ENCODE measurements at regions of chr19 and their contacts with region 1.

Region 1: GRCh38 chr19:5977785-5978605 is at the start of gene RANBP3:
- DNase-seq: peak; percentile 98 to 100 (median 99)
- H3K4me3 ChIP-seq: peak within 1 kb of the TSS; percentile 78 to 81
- H3K4me3 Mint-ChIP-seq: peak within 1 kb of the TSS; percentile 91 to 99 (median 94)
- H3K27ac ChIP-seq: peak within 1 kb of the TSS; percentile 84
- H3K27ac Mint-ChIP-seq: peak within 1 kb of the TSS; percentile 95 to 97 (median 96)
- H3K4me1 ChIP-seq: peaks cover 65% of the 10 kb centered on the region
- H3K4me1 Mint-ChIP-seq: peaks cover 38 to 71% (median 50%) of the 10 kb centered on the region in 4 donors
- H3K27me3 ChIP-seq: no peaks in the 10 kb centered on the region
- H3K27me3 Mint-ChIP-seq: no peaks in the 10 kb centered on the region
- total RNA-seq, gene RANBP3: 84.1 to 94.9 TPM

Region 2: DNA sequence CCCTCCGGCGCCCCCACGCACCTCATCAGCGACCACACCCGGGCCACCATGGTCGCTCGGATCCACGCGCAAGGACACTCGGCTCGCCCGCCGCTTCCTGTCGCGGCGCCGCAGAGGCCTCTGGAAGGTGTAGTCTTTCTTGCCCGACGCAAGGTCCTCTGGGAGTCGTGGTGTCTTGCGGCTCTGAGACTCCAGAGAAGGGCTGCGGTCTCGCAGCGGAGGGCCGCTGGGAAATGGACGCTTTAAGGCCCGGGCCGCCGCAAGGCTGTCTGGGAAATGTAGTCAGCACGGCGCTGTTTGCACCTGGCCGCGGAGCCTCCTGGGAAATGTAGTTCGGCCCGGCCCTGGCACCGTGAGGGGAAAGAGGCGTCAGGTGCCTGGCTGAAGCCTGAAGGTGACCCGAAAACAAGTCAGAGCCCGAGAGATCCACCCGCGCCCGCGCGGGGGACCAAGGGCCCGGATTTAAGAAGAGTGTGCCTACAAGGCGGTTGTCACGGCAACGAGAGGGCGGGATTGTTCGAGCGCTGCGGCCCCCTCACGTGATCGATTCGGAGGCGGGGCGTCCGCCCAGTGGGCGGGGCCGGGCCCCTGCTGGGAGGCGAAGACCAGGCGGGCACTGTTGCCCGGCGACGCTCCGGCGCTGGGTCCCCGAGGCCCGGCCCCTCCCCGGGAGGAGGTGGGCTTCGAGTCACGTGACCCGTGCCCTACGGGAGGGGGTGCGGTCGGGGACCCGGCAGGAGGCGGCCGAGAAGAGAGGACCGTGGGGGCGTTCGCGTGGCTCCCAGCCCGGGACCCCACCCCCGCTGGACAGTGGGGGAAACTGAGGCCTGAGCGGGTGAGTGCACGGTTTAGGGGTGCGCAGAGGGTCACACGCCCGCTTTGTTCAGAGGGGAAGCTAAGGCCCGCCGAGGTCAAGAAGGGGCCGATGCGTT is 297.3 kb before region 1 on chr19 and contains the starts of genes HSD11B1L and MICOS13:
- CTCF ChIA-PET with region 1: no interaction called
- POLR2A ChIA-PET with region 1: no interaction called
- intact Hi-C with region 1: loop called (anchors 2 kb)
- DNase-seq: peak; percentile 99 to 100 (median 99)
- H3K4me3 ChIP-seq: peak within 1 kb of the TSS; percentile 62 to 96
- H3K4me3 Mint-ChIP-seq: peak within 1 kb of the TSS; percentile 87 to 98 (median 93)
- H3K27ac ChIP-seq: peak within 1 kb of the TSS; percentile 87
- H3K27ac Mint-ChIP-seq: peak within 1 kb of the TSS; percentile 94 to 100 (median 99)
- H3K4me1 ChIP-seq: peaks cover 21% of the 10 kb centered on the region
- H3K4me1 Mint-ChIP-seq: peaks cover 18 to 41% (median 26%) of the 10 kb centered on the region in 4 donors
- H3K27me3 ChIP-seq: no peaks in the 10 kb centered on the region
- H3K27me3 Mint-ChIP-seq: no peaks in the 10 kb centered on the region
- total RNA-seq, gene HSD11B1L: 3.5 to 4.8 TPM
- total RNA-seq, gene MICOS13: 40.5 to 41.1 TPM

Region 3: DNA sequence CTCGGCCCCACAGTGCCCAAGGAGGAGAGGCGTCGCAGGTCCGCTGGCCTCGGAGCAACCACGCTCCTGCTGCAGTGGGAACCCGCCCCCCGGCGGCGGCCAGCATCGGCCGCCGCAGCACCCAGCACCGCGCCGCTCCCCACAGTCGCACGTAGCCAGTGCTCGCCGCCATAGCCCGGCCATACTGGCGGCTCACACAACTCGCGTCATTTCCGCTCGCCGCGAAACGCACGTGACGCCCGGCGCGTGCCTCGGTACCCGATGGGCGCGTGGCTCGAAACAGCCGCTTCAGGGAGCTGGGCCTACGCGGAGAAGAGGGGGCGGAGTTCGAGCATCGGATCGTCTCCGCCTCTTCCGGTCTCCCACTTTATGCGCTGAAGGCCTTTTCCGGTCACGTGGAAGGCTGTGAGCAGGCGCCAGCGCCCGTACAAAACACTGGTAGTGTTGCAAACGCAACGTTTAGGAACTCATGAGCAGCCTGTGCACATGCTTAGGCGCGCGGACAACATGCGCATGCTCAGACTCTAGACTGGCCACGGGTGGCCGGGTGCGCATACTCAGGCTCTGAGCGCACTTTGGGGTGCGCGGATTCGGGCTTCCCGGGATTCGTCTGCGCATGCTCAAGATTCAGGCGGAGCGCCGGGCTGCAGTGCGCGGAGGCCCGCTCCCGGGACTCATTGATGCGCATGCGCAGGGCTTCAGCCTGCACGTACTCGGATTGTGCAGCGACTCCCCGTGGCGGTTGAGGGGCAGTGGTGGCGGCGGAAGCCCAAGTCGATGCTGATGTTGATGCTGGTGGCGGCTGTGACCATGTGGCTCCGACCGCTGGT is 257.8 kb before region 1 on chr19 and contains the starts of genes CATSPERD and LONP1:
- CTCF ChIA-PET with region 1: no interaction called
- POLR2A ChIA-PET with region 1: interaction called, 3 read pairs
- intact Hi-C with region 1: loop called (anchors 1 kb)
- DNase-seq: peak; percentile 98 to 99 (median 99)
- H3K4me3 ChIP-seq: peak within 1 kb of the TSS; percentile 87 to 92
- H3K4me3 Mint-ChIP-seq: peak within 1 kb of the TSS; percentile 90 to 97 (median 90)
- H3K27ac ChIP-seq: peak within 1 kb of the TSS; percentile 89
- H3K27ac Mint-ChIP-seq: peak within 1 kb of the TSS; percentile 94 to 99 (median 97)
- H3K4me1 ChIP-seq: peaks cover 23% of the 10 kb centered on the region
- H3K4me1 Mint-ChIP-seq: peaks cover 20 to 37% (median 27%) of the 10 kb centered on the region in 4 donors
- H3K27me3 ChIP-seq: no peaks in the 10 kb centered on the region
- H3K27me3 Mint-ChIP-seq: peaks cover 0 to 6% of the 10 kb centered on the region in 2 donors
- total RNA-seq, gene CATSPERD: not detected
- total RNA-seq, gene LONP1: 59.6 to 64.7 TPM

Region 4: DNA sequence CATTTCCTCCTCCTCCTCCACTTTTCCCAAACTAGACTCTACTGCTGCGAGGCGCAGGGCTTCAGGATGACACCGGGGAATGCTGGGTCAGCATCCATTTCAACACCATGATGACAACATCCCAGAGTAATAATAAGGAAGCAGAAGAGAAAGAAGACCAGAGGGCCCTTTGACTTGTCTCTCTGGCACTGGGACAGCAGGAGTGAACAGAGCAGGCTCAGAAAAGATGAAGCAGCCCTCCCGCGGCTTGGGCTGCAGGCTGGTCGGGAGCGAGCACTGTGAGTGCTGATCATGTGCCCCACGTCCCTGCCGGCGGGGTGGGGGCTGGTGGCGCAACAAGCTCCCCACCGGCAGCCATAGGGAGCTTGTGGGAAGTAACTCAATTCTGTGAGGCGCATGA is 30.6 kb before region 1 on chr19:
- CTCF ChIA-PET with region 1: interaction called, 3 read pairs
- POLR2A ChIA-PET with region 1: interaction called, 23 read pairs
- intact Hi-C with region 1: no loop called
- DNase-seq: no peak
- H3K4me3 ChIP-seq: no peak overlapping the region
- H3K4me3 Mint-ChIP-seq: peak overlapping the region in 3 of 8 donors; percentile 38 to 61 (median 40)
- H3K27ac ChIP-seq: no peak overlapping the region
- H3K27ac Mint-ChIP-seq: peak overlapping the region in 6 of 7 donors; percentile 36 to 94 (median 82)
- H3K4me1 ChIP-seq: peaks cover 63% of the 10 kb centered on the region
- H3K4me1 Mint-ChIP-seq: peaks cover 50 to 76% (median 65%) of the 10 kb centered on the region in 4 donors
- H3K27me3 ChIP-seq: no peaks in the 10 kb centered on the region
- H3K27me3 Mint-ChIP-seq: no peaks in the 10 kb centered on the region

Region 5: DNA sequence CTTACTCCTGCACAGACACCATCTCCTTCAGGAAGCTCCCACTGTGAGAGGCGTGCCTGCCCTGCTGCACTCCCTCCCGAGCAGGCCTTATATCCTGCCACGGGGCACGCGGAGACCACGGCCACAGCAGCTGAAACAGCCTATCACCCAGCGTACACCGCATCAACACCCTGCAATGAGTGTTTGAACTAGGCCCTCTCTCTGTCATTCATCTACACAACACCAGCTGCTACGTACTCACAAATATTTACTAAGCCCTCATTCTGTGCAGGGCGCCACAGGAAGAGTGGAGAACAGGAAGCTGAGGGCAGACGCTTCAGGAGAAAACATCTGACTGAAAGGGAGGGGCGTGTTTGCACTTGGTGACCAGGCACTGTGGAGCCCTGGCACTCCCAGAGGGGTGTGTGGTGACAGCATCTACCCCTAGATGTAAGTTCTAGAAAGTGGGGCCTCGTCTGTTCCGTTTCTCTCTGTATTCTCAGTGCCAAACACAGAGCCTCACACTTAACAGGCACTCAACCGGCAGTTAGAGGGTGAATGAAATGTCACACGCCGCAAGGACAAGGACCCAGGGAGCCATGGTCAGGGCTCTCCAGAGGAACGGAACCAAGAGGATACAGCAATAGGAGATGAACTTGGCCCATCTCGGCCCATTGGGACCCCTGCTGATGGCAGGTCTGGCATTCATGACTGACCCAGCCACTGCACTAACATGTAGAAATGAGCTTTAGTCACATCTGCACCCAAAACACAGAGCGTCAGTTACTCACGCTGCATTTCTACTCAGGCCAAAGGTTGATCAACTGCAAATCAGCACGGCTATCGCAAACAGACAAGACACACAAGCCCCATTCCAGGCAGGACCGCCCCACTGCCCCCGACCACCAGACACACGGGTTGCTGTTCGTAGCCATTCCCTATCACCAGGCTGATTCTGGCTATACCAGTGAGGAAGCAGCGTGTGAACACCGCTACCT is 15.7 kb before region 1 on chr19:
- CTCF ChIA-PET with region 1: interaction called, 68 read pairs
- POLR2A ChIA-PET with region 1: interaction called, 47 read pairs
- intact Hi-C with region 1: loop called (anchors 1 kb)
- DNase-seq: peak; percentile 84 to 93 (median 88)
- H3K4me3 ChIP-seq: peak overlapping the region; percentile 11 to 42
- H3K4me3 Mint-ChIP-seq: peak overlapping the region; percentile 60 to 97 (median 82)
- H3K27ac ChIP-seq: peak overlapping the region; percentile 78
- H3K27ac Mint-ChIP-seq: peak overlapping the region; percentile 89 to 100 (median 99)
- H3K4me1 ChIP-seq: peaks cover 95% of the 10 kb centered on the region
- H3K4me1 Mint-ChIP-seq: peaks cover 53 to 99% (median 82%) of the 10 kb centered on the region in 4 donors
- H3K27me3 ChIP-seq: no peaks in the 10 kb centered on the region
- H3K27me3 Mint-ChIP-seq: no peaks in the 10 kb centered on the region

Region 6: GRCh38 chr19:6110360-6110977 is 132.5 kb after region 1 on chr19 and contains the start of gene RFX2:
- CTCF ChIA-PET with region 1: no interaction called
- POLR2A ChIA-PET with region 1: no interaction called
- intact Hi-C with region 1: loop called (anchors 5 kb)
- DNase-seq: peak; percentile 99 to 100 (median 99)
- H3K4me3 ChIP-seq: peak within 1 kb of the TSS; percentile 52 to 55
- H3K4me3 Mint-ChIP-seq: peak within 1 kb of the TSS; percentile 90 to 97 (median 94)
- H3K27ac ChIP-seq: peak within 1 kb of the TSS; percentile 43
- H3K27ac Mint-ChIP-seq: peak within 1 kb of the TSS; percentile 93 to 97 (median 95)
- H3K4me1 ChIP-seq: peaks cover 27% of the 10 kb centered on the region
- H3K4me1 Mint-ChIP-seq: peaks cover 11 to 26% (median 23%) of the 10 kb centered on the region in 4 donors
- H3K27me3 ChIP-seq: peaks cover 4% of the 10 kb centered on the region
- H3K27me3 Mint-ChIP-seq: peaks cover 2 to 7% of the 10 kb centered on the region in 2 donors
- total RNA-seq, gene RFX2: 5.6 to 6.7 TPM

Measured in CD4-positive, alpha-beta memory T cell (primary cell).